Endothelial cell of umbilical vein (primary cell): ENCODE measurements at regions of chr2 and their contacts with region 1.

Region 1: GRCh38 chr2:221423210-221423786 is 148.8 kb downstream of the EPHA4 start:
- DNase-seq: peak; percentile 97
- H3K4me3 ChIP-seq: peak overlapping the region in 1 of 3 experiments; percentile 1
- H3K27ac ChIP-seq: peak overlapping the region; percentile 82
- H3K4me1 ChIP-seq: peaks cover 35% of the 10 kb centered on the region
- H3K27me3 ChIP-seq: no peaks in the 10 kb centered on the region
- CTCF ChIP-seq: no peak
- POLR2A ChIP-seq: no peak

Region 2: GRCh38 chr2:221444106-221444505 is 20.8 kb after region 1 on chr2:
- CTCF ChIA-PET with region 1: interaction called, 8 read pairs
- POLR2A ChIA-PET with region 1: no interaction called
- dilution Hi-C with region 1: no loop called
- intact Hi-C with region 1: loop called (anchors 1 kb)
- DNase-seq: peak; percentile 92
- H3K4me3 ChIP-seq: no peak overlapping the region
- H3K27ac ChIP-seq: peak overlapping the region; percentile 95
- H3K4me1 ChIP-seq: peaks cover 31% of the 10 kb centered on the region
- H3K27me3 ChIP-seq: no peaks in the 10 kb centered on the region
- CTCF ChIP-seq: no peak
- POLR2A ChIP-seq: no peak

Region 3: GRCh38 chr2:221502270-221503010 is 79.1 kb after region 1 on chr2:
- CTCF ChIA-PET with region 1: no interaction called
- POLR2A ChIA-PET with region 1: no interaction called
- dilution Hi-C with region 1: no loop called
- intact Hi-C with region 1: loop called (anchors 2 kb)
- DNase-seq: peak; percentile 86
- H3K4me3 ChIP-seq: peak overlapping the region in 1 of 3 experiments; percentile 43
- H3K27ac ChIP-seq: peak overlapping the region; percentile 86
- H3K4me1 ChIP-seq: peaks cover 39% of the 10 kb centered on the region
- H3K27me3 ChIP-seq: no peaks in the 10 kb centered on the region
- CTCF ChIP-seq: no peak
- POLR2A ChIP-seq: peak; percentile 54

Region 4: GRCh38 chr2:221529943-221530652 is 106.8 kb after region 1 on chr2:
- CTCF ChIA-PET with region 1: no interaction called
- POLR2A ChIA-PET with region 1: no interaction called
- dilution Hi-C with region 1: no loop called
- intact Hi-C with region 1: loop called (anchors 1 kb)
- DNase-seq: peak; percentile 89
- H3K4me3 ChIP-seq: peak overlapping the region in 1 of 3 experiments; percentile 37
- H3K27ac ChIP-seq: peak overlapping the region; percentile 88
- H3K4me1 ChIP-seq: peaks cover 41% of the 10 kb centered on the region
- H3K27me3 ChIP-seq: no peaks in the 10 kb centered on the region
- CTCF ChIP-seq: no peak
- POLR2A ChIP-seq: no peak